ENCODE measurements at regions of chr5 and their contacts with region 1.

Region 1: GRCh38 chr5:170846416-170846815 is 15.4 kb upstream of the RANBP17 start:
- DNase-seq: no peak
- H3K4me3 Mint-ChIP-seq: no peak overlapping the region
- H3K27ac Mint-ChIP-seq: no peak overlapping the region
- H3K4me1 Mint-ChIP-seq: peaks cover 31% of the 10 kb centered on the region
- H3K27me3 Mint-ChIP-seq: no peaks in the 10 kb centered on the region
- CTCF ChIP-seq: no peak

Region 2: GRCh38 chr5:170945275-170945674 is 98.9 kb after region 1 on chr5:
- CTCF ChIA-PET with region 1: interaction called, 3 read pairs
- POLR2A ChIA-PET with region 1: no interaction called
- intact Hi-C with region 1: loop called (anchors 1 kb)
- DNase-seq: no peak
- H3K4me3 Mint-ChIP-seq: no peak overlapping the region
- H3K27ac Mint-ChIP-seq: no peak overlapping the region
- H3K4me1 Mint-ChIP-seq: peaks cover 6% of the 10 kb centered on the region
- H3K27me3 Mint-ChIP-seq: no peaks in the 10 kb centered on the region
- CTCF ChIP-seq: no peak